Activated B cell treated with CpG ODN at 0.5 μM for 24 hours (primary cell): ENCODE measurements at regions of chr1 and their contacts with region 1.

Region 1: GRCh38 chr1:114757455-114758250 is at the start of gene CSDE1:
- DNase-seq: peak; percentile 92
- ATAC-seq: peak; percentile 90
- H3K4me3 Mint-ChIP-seq: peak within 1 kb of the TSS; percentile 100
- H3K27ac Mint-ChIP-seq: peak within 1 kb of the TSS; percentile 100
- H3K4me1 Mint-ChIP-seq: peaks cover 57% of the 10 kb centered on the region
- H3K27me3 Mint-ChIP-seq: no peaks in the 10 kb centered on the region
- CTCF ChIP-seq: no peak
- total RNA-seq, gene CSDE1: 416 and 424 TPM in 2 replicates

Region 2: DNA sequence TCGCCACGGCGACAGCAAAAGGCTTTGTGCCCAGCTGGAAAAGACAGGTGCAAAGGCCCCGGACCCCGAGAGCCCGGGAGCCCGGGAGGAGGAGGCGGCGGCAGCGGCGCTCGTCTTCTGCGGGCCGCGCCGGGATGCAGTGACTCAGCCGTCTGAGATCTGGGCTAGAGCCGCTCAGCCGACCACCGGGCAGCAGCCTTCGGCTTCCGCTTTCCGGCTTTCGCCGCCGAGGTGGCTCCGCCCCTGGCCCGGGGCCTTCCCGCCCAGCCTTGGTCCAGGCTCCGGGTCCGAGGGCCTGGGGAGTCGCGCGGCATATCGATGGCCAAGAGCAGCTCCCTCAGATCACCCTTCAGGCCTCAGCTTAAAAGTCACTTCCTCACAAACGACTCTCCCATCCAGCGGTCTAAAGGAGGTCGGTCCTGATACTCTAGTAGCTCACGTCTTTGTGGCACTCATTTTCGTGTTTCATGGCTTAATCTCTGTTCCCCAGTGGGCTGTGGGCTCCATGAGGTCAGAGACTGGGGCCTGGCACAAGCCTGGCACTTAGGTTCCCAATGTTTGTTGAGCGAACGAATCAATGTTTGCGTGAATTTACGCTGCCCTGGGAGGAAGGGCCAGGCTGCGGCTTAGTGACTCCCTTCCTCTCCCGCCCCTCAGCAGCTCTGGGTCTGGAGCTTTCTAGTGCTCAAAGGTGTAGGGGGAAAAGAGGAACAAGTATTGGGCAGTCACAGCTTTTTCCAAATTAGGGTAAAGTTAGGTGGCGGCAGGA is 998.1 kb before region 1 on chr1 and contains the start of gene PHTF1:
- CTCF ChIA-PET with region 1: no interaction called
- POLR2A ChIA-PET with region 1: no interaction called
- intact Hi-C with region 1: loop called (anchors 5 kb)
- DNase-seq: peak; percentile 73
- ATAC-seq: peak; percentile 88
- H3K4me3 Mint-ChIP-seq: peak within 1 kb of the TSS; percentile 94
- H3K27ac Mint-ChIP-seq: peak within 1 kb of the TSS; percentile 98
- H3K4me1 Mint-ChIP-seq: peaks cover 21% of the 10 kb centered on the region
- H3K27me3 Mint-ChIP-seq: no peaks in the 10 kb centered on the region
- CTCF ChIP-seq: no peak
- total RNA-seq, gene PHTF1: 19.2 and 25.0 TPM in 2 replicates

Region 3: DNA sequence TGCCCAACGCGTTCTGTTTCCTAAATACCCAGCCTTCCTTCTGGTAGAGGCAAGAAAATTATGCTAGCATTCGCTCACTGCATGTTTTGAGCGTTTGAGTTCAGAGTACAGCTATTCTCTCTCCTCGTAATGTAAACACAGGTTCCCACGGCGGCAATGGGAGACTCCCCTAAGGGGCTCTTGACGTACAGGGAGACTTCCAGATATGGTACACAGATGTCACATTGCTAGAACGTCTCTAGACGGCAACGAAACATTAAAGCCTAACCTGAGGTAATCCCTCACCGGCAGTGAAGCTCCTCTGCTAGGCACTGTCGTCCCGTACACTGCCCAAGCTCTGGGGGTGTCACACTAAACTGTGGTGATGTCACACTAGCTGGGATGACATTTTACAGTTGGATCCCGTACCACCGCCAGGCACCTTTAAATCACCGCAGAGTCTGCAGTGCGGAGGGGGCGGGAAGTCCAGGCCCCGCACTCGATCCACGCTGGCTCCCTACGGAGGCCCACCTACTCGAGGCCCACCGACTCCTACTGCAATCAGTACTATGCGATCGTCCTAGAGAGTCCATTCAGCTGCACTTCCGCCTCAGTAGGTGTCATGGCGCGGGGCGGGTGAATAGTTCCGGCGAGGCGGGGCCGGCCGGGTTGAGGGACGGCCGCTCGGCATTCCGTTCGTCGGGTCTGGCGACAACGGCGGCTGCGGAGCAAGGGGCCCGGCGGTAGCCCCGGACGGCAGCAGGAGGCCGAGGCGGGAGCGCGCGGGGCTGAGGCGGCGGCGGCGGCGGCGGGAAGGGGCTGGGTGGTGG is 828.5 kb before region 1 on chr1 and contains the start of gene HIPK1:
- CTCF ChIA-PET with region 1: no interaction called
- POLR2A ChIA-PET with region 1: no interaction called
- intact Hi-C with region 1: loop called (anchors 1 kb)
- DNase-seq: peak; percentile 93
- ATAC-seq: peak; percentile 73
- H3K4me3 Mint-ChIP-seq: peak within 1 kb of the TSS; percentile 99
- H3K27ac Mint-ChIP-seq: peak within 1 kb of the TSS; percentile 99
- H3K4me1 Mint-ChIP-seq: peaks cover 50% of the 10 kb centered on the region
- H3K27me3 Mint-ChIP-seq: no peaks in the 10 kb centered on the region
- CTCF ChIP-seq: no peak
- total RNA-seq, gene HIPK1: 38.0 and 39.0 TPM in 2 replicates

Region 4: DNA sequence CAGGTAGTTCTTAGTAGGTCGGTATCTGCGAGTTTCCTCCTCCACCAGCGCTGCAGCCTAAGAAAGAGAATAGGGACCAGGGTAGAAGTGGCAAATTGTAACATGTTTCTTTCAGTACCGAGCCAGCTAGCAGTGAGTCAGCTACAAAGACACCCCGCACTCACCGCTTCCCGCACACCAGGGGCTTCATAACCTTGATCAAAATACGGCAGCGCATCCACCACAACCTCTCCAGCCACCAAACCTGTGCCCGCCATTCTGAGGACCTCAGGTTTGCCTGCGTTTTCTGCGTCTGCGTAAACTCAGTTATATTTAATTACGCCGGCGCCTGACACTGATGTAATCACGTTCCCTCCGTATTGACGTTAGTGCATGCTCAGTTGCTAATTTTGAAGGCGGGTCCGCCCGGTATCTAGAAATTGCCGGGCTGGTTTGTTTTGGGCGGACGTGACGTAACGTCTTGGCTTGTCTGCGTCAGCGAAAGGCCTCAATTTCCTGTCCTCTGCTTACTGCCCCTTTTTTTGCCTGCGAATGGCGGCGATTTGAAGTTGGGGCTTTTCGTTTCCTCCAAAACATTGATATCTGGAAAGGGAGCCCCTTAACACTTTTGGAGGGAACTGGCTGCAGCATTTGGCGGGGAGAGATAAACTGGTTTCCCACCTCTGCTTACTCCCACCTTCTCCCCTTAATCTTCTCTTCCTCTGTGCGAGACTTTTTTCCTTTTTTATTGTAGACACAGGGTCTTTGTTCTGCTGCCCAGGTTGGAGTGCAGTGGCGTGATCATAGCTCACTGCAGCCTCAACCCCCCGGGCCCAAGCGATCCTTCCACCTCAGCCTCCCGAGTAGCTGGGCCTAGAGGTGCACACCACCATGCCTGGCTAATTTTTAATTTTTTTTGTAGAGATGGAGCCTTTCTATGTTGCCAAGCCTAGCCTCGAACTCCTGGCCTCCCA is 176.0 kb before region 1 on chr1 and contains the start of gene BCAS2:
- CTCF ChIA-PET with region 1: no interaction called
- POLR2A ChIA-PET with region 1: interaction called, 3 read pairs
- intact Hi-C with region 1: loop called (anchors 1 kb)
- DNase-seq: peak; percentile 81
- ATAC-seq: peak; percentile 97
- H3K4me3 Mint-ChIP-seq: peak within 1 kb of the TSS; percentile 99
- H3K27ac Mint-ChIP-seq: peak within 1 kb of the TSS; percentile 98
- H3K4me1 Mint-ChIP-seq: peaks cover 29% of the 10 kb centered on the region
- H3K27me3 Mint-ChIP-seq: peaks cover 2% of the 10 kb centered on the region
- CTCF ChIP-seq: no peak
- total RNA-seq, gene BCAS2: 33.1 and 36.3 TPM in 2 replicates

Region 5: GRCh38 chr1:114716304-114717170 is 41.1 kb before region 1 on chr1 and contains the start of gene NRAS:
- CTCF ChIA-PET with region 1: no interaction called
- POLR2A ChIA-PET with region 1: interaction called, 30 read pairs
- intact Hi-C with region 1: loop called (anchors 1 kb)
- DNase-seq: peak; percentile 97
- ATAC-seq: peak; percentile 94
- H3K4me3 Mint-ChIP-seq: peak within 1 kb of the TSS; percentile 99
- H3K27ac Mint-ChIP-seq: peak within 1 kb of the TSS; percentile 98
- H3K4me1 Mint-ChIP-seq: peaks cover 28% of the 10 kb centered on the region
- H3K27me3 Mint-ChIP-seq: no peaks in the 10 kb centered on the region
- CTCF ChIP-seq: no peak
- total RNA-seq, gene NRAS: 53.3 and 55.5 TPM in 2 replicates

Region 6: GRCh38 chr1:114780344-114781226 is 22.9 kb after region 1 on chr1 and contains the start of gene SIKE1:
- CTCF ChIA-PET with region 1: no interaction called
- POLR2A ChIA-PET with region 1: interaction called, 20 read pairs
- intact Hi-C with region 1: loop called (anchors 1 kb)
- DNase-seq: peak; percentile 80
- ATAC-seq: peak; percentile 97
- H3K4me3 Mint-ChIP-seq: peak within 1 kb of the TSS; percentile 100
- H3K27ac Mint-ChIP-seq: peak within 1 kb of the TSS; percentile 97
- H3K4me1 Mint-ChIP-seq: peaks cover 28% of the 10 kb centered on the region
- H3K27me3 Mint-ChIP-seq: peaks cover 7% of the 10 kb centered on the region
- CTCF ChIP-seq: no peak
- total RNA-seq, gene SIKE1: 38.4 and 44.2 TPM in 2 replicates

Region 7: DNA sequence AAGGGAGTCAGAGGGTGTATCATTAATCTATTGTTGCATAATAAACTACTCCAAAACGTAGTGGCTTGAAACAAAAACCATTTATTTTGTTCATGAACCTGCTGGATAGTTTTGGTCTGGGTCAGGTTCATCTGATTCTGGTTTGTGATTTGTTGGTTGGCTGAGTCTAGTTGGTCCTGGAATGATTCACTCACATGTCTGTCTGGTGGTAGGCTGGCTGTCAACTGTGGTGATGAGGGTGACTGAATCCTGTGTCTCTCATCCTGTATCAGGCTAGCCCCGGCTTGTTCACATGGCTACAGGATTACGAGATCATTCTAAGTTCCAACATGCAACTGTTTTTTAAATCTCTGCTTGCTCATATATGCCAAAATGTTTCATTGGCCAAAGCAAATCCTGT is 45.3 kb after region 1 on chr1:
- CTCF ChIA-PET with region 1: no interaction called
- POLR2A ChIA-PET with region 1: no interaction called
- intact Hi-C with region 1: no loop called
- DNase-seq: no peak
- ATAC-seq: no peak
- H3K4me3 Mint-ChIP-seq: no peak overlapping the region
- H3K27ac Mint-ChIP-seq: no peak overlapping the region
- H3K4me1 Mint-ChIP-seq: no peaks in the 10 kb centered on the region
- H3K27me3 Mint-ChIP-seq: peaks cover 11% of the 10 kb centered on the region
- CTCF ChIP-seq: no peak